ENCODE measurements at regions of chr16 and their contacts with region 1.

Region 1: DNA sequence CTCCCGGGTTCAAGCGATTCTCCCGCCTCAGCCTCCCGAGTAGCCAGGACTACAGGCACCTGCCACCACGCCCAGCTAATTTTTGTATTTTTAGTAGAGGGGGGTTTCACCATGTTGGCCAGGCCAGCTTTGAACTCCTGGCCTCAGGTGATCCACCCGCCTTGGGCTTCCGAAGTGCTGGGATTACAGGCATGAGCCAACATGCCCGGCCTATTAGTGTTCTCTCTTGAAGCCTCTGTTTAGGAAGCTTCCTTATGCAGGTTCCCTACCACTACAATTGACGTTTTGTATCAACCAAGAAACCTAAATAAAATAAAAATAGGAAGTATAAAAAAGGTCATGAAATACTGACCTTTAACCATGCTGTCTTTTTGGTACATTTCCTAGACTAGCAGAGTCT is 16.0 kb downstream of the CHST5 start:
- DNase-seq: peak; percentile 29
- H3K4me3 ChIP-seq: no peak overlapping the region
- H3K27ac ChIP-seq: no peak overlapping the region
- H3K4me1 ChIP-seq: peaks cover 7% of the 10 kb centered on the region
- H3K27me3 ChIP-seq: no peaks in the 10 kb centered on the region
- CTCF ChIP-seq: no peak

Region 2: DNA sequence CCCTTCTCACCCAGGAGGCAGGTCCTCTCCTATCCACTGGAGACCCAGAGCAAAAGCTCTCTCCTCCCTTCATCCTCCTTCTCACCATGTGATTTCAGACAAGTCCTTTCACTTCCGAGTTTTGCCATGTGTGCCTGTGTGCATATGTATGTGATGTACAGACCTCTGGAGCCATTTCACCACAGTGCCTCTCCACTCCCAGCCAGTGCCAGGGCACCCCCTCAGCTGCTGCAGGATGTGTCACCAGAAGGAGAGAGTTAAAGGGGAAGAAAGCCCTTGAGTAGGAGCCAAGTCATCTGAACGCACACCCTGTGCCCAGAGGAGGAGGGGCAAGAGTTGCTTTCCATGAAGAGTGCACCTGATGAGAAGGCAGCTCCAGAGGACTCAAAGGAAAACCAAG is 41.8 kb before region 1 on chr16:
- CTCF ChIA-PET with region 1: no interaction called
- dilution Hi-C with region 1: no loop called
- in situ Hi-C with region 1: loop called (anchors 5 kb)
- intact Hi-C with region 1: no loop called
- DNase-seq: peak; percentile 52
- H3K4me3 ChIP-seq: no peak overlapping the region
- H3K27ac ChIP-seq: no peak overlapping the region
- H3K4me1 ChIP-seq: peaks cover 33% of the 10 kb centered on the region
- H3K27me3 ChIP-seq: no peaks in the 10 kb centered on the region
- CTCF ChIP-seq: no peak

Region 3: GRCh38 chr16:75506567-75506966 is 13.3 kb before region 1 on chr16:
- CTCF ChIA-PET with region 1: interaction called, 14 read pairs
- dilution Hi-C with region 1: no loop called
- in situ Hi-C with region 1: no loop called
- intact Hi-C with region 1: loop called (anchors 1 kb)
- DNase-seq: peak; percentile 93
- H3K4me3 ChIP-seq: no peak overlapping the region
- H3K27ac ChIP-seq: peak overlapping the region; percentile 86
- H3K4me1 ChIP-seq: peaks cover 39% of the 10 kb centered on the region
- H3K27me3 ChIP-seq: no peaks in the 10 kb centered on the region
- CTCF ChIP-seq: no peak

Region 4: DNA sequence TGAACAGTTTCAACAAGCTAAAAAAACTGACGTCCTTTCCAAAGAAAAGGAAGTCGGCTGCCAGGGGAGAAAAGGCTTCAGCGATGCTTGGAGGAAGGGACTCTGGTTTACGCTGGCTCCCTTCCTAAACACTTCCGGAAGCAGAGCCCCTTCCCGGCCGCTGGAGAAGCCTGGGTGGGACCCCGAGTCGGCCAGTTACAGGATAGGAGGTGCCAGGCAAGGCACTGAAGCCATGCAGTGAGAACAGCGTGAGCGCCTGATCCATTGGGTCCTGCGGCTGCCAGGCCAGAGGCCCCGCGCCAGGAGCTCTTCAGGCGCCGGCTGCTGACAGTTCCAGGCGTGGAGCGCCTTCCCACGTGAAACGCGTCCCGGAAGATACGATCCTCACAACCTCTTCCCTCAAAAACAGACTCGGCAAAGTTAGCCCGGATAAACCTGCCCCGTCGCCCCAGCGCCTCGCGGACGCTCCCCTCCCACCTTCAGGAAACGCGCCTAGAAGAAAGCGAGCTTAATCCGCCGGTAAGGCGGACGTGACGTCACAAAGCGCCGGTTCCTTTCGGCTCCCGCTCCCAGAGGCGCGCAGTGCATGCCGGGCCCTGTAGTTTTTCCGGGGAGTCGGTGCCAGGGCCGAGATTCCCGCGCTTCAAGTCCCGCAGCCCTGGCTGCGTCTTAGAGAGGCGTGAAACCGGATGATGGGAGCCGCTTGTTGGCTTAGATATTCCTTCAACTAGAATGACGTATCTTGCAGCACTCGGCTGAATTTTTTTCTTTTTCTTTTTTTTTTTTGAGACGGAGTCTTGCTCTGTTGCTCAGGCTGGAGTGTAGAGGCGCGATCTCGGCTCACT is 103.1 kb after region 1 on chr16 and contains the start of gene ADAT1:
- CTCF ChIA-PET with region 1: interaction called, 3 read pairs
- dilution Hi-C with region 1: no loop called
- in situ Hi-C with region 1: no loop called
- intact Hi-C with region 1: loop called (anchors 1 kb)
- DNase-seq: peak; percentile 97
- H3K4me3 ChIP-seq: peak within 1 kb of the TSS; percentile 75 to 92 (median 83)
- H3K27ac ChIP-seq: peak within 1 kb of the TSS; percentile 79
- H3K4me1 ChIP-seq: peaks cover 11% of the 10 kb centered on the region
- H3K27me3 ChIP-seq: no peaks in the 10 kb centered on the region
- CTCF ChIP-seq: no peak
- total RNA-seq, gene ADAT1: 62.0 to 86.5 TPM

Measured in mammary epithelial cell (primary cell).